SK-N-SH (cell line): ENCODE measurements at regions of chr12 and their contacts with region 1.

Region 1: DNA sequence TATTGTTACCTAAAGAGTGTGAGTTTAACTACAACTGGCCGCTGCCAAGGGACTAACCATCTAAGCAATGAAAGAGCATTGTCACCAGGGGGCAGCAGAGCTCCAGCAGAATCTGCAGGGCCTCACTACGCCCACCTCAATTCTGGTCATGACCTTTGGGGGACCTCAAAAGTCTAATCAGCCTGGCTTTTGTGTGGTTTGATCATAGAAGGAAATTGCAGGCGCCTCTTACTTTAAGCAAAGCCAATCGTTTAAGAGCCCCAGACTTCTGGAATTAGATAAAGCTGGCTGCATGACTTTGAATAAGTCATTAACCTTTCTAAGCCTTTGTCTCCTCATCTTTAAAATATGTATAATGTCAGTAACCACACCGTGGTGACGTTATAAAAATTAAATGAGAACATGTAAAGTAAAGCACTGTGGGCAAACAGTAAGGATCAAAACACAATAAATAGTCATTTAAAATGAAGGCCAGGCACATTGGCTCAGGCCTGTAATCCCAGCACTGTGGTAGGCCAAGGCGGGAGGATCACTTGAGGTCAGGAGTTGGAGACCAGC is 58.6 kb downstream of the TBX3 start:
- DNase-seq: peak; percentile 68
- H3K4me3 ChIP-seq: no peak overlapping the region; a peak in 1 of 4 replicates
- H3K27ac ChIP-seq: no peak overlapping the region
- H3K4me1 ChIP-seq: no peaks in the 10 kb centered on the region
- H3K27me3 ChIP-seq: no peaks in the 10 kb centered on the region
- CTCF ChIP-seq: peak; percentile 86
- EP300 ChIP-seq: no peak
- RAD21 ChIP-seq: peak; percentile 86

Region 2: GRCh38 chr12:114611145-114612018 is 14.0 kb before region 1 on chr12:
- CTCF ChIA-PET with region 1: interaction called, 13 read pairs
- POLR2A ChIA-PET with region 1: no interaction called
- DNase-seq: no peak
- H3K4me3 ChIP-seq: no peak overlapping the region
- H3K27ac ChIP-seq: no peak overlapping the region
- H3K4me1 ChIP-seq: no peaks in the 10 kb centered on the region
- H3K27me3 ChIP-seq: no peaks in the 10 kb centered on the region; the same call in 1 of the 2 replicates
- CTCF ChIP-seq: no peak
- EP300 ChIP-seq: no peak
- RAD21 ChIP-seq: no peak

Region 3: DNA sequence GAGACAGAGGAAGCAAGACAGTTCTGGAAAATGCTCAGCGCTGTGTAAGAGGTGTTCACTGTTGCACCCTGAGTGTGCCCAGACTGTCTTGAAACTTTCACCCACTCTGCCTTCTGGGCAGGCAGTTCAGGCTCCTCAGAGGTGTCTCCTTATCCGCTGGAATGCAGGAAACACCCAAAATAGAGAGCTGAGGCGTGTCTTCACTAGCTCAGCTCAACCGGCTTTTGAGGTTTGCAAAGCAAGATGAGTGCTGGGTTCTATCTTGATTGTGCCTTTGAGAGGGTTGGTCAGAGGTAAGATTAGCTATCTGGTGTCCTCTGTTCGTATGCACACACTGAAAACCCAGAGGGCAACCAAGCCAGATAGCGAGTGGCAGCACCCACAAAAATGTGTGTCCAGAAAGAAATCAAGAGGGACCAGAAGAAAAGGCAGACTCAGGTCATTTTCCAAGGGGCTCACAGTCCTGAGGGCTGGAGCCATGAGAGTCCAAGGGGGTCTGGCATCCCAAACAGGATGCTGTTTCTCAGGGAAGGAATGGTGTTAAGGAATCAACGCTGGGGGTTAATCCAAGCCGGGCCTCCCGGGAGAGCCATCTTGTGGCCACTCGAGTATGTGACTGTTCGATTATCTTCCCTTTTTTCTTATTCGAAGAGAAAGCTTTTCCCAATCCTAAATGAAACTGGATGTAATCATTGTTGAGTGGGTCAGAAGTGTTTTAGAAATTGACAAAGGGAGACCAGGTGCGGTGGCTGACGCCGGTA is 11.5 kb after region 1 on chr12:
- CTCF ChIA-PET with region 1: interaction called, 71 read pairs
- POLR2A ChIA-PET with region 1: no interaction called
- DNase-seq: peak; percentile 56
- H3K4me3 ChIP-seq: no peak overlapping the region
- H3K27ac ChIP-seq: no peak overlapping the region
- H3K4me1 ChIP-seq: no peaks in the 10 kb centered on the region
- H3K27me3 ChIP-seq: no peaks in the 10 kb centered on the region
- CTCF ChIP-seq: peak; percentile 40
- EP300 ChIP-seq: no peak
- RAD21 ChIP-seq: peak; percentile 40

Region 4: DNA sequence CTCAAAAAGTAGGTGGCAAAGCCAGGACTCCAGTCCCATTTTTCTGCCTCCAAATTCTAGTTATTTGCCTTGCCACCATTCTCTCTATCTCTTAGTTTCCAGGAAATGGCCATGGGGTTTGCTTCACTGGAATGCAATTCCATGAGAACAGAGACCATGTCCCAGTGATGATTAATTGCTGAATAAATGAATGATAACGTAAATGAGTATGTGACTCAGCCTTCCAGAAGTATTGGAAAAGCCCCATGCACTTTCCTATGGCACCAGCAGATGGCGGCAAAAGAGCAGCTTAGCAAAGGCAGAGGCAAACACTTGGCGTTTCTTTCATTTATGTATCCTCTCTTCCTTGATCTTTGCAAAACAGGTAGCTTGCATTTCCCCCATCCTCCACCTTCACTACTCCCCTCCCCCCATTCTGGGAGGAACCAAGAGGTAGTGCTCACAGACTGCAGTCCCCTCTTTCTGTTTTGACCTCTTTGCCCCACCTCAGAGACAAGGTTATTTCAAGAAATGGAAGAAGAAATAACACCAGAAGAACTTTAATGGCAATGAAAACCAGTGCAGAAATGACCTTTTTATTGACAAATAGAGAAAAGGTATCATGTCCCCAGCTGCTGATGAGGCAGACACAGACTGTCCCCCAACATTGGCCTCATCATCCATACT is 37.3 kb after region 1 on chr12:
- CTCF ChIA-PET with region 1: interaction called, 26 read pairs
- POLR2A ChIA-PET with region 1: no interaction called
- DNase-seq: peak; percentile 73
- H3K4me3 ChIP-seq: no peak overlapping the region
- H3K27ac ChIP-seq: no peak overlapping the region
- H3K4me1 ChIP-seq: no peaks in the 10 kb centered on the region
- H3K27me3 ChIP-seq: no peaks in the 10 kb centered on the region
- CTCF ChIP-seq: peak; percentile 94
- EP300 ChIP-seq: peak; percentile 32 to 47; a peak in 1 of 4 replicates
- RAD21 ChIP-seq: peak; percentile 96

Region 5: GRCh38 chr12:114711689-114712152 is 86.3 kb after region 1 on chr12:
- CTCF ChIA-PET with region 1: no interaction called
- POLR2A ChIA-PET with region 1: no interaction called
- DNase-seq: no peak
- H3K4me3 ChIP-seq: no peak overlapping the region
- H3K27ac ChIP-seq: no peak overlapping the region
- H3K4me1 ChIP-seq: no peaks in the 10 kb centered on the region
- H3K27me3 ChIP-seq: no peaks in the 10 kb centered on the region; the same call in 1 of the 2 replicates
- CTCF ChIP-seq: no peak
- EP300 ChIP-seq: no peak
- RAD21 ChIP-seq: no peak

Region 6: GRCh38 chr12:115910057-115910456 is 1284.7 kb after region 1 on chr12:
- CTCF ChIA-PET with region 1: interaction called, 11 read pairs
- POLR2A ChIA-PET with region 1: no interaction called
- DNase-seq: no peak
- H3K4me3 ChIP-seq: no peak overlapping the region
- H3K27ac ChIP-seq: no peak overlapping the region
- H3K4me1 ChIP-seq: no peaks in the 10 kb centered on the region
- H3K27me3 ChIP-seq: 0 out of 2 replicates have a peak, but pooled peaks cover 4% of the 10 kb centered on the region
- CTCF ChIP-seq: no peak
- EP300 ChIP-seq: no peak
- RAD21 ChIP-seq: no peak